Calu3 (cell line): ENCODE measurements at regions of chr7 and their contacts with region 1.

Region 1: GRCh38 chr7:6272481-6273323 is at the start of gene CYTH3:
- DNase-seq: peak; percentile 97
- H3K4me3 Mint-ChIP-seq: peak within 1 kb of the TSS; percentile 99
- H3K27ac Mint-ChIP-seq: peak within 1 kb of the TSS; percentile 89
- H3K4me1 Mint-ChIP-seq: peaks cover 70% of the 10 kb centered on the region
- H3K27me3 Mint-ChIP-seq: no peaks in the 10 kb centered on the region
- CTCF ChIP-seq: no peak
- total RNA-seq, gene CYTH3: 47.2 and 73.4 TPM in 2 replicates

Region 2: GRCh38 chr7:5574770-5575269 is 697.9 kb before region 1 on chr7:
- CTCF ChIA-PET with region 1: no interaction called
- intact Hi-C with region 1: no loop called
- DNase-seq: no peak
- H3K4me3 Mint-ChIP-seq: no peak overlapping the region
- H3K27ac Mint-ChIP-seq: no peak overlapping the region
- H3K4me1 Mint-ChIP-seq: no peaks in the 10 kb centered on the region
- H3K27me3 Mint-ChIP-seq: peaks cover 51% of the 10 kb centered on the region
- CTCF ChIP-seq: no peak

Region 3: DNA sequence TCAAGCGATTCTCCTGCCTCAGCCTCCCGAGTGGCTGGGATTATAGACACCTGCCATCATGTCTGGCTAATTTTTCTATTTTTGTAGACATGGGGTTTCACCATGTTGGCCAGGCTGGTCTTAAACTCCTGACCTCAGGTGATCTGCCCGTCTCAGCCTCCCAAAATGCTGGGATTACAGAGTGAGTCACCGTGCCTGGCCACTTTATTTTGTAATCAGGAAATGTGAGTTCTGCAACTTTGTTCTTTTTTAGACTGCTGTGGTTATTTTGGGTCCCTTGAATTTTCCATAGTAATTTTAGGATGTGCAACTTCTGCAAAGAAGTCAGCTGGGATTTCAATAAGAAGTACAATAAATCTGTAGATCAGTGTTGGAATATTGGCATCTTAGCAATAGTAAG is 97.1 kb before region 1 on chr7:
- CTCF ChIA-PET with region 1: no interaction called
- intact Hi-C with region 1: loop called (anchors 5 kb)
- DNase-seq: peak; percentile 42
- H3K4me3 Mint-ChIP-seq: no peak overlapping the region
- H3K27ac Mint-ChIP-seq: no peak overlapping the region
- H3K4me1 Mint-ChIP-seq: peaks cover 8% of the 10 kb centered on the region
- H3K27me3 Mint-ChIP-seq: no peaks in the 10 kb centered on the region
- CTCF ChIP-seq: no peak

Region 4: DNA sequence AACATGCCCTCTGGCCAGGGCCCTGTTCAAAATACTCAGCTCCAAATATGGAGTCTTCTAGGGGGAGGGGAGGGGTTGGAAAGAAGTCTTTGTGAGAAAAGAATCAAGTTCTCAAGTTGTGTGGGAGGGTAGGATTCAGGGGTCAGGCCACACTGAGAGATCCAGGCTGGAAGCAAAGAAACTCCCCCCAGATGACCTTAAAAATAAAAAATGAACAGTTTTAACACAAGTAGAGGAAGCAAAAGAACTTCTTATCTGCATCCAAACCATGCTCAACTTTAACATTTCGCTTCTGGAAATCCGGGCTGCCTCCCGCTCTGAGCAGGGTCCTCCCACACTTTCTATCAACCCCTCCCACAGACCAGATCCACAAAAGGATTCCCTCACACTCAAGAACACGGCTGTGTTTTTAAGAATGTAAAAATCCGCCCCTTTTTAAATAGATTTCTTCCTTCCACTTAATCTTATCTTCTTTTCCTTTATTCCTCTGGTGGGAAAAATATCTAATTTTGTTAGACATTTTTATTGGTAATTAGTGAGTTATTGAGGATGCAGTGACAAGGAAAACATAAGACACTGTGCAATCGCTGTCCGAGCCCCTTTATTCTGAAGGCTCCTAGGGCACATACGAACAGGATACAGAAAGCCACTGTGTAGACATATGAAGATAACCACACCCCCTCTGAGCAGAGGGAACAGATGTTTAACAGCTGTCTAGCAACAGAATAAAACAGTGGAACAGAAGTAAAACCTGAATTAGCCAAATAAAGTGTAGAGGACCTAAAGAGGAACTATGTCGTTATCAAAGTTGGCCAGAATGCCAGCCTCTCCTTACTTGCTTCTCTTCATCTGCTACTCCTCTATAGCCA is 44.1 kb before region 1 on chr7:
- CTCF ChIA-PET with region 1: interaction called, 4 read pairs
- intact Hi-C with region 1: loop called (anchors 5 kb)
- DNase-seq: no peak
- H3K4me3 Mint-ChIP-seq: no peak overlapping the region
- H3K27ac Mint-ChIP-seq: no peak overlapping the region
- H3K4me1 Mint-ChIP-seq: peaks cover 42% of the 10 kb centered on the region
- H3K27me3 Mint-ChIP-seq: no peaks in the 10 kb centered on the region
- CTCF ChIP-seq: no peak

Region 5: GRCh38 chr7:6306471-6306870 is 33.8 kb after region 1 on chr7:
- CTCF ChIA-PET with region 1: interaction called, 13 read pairs
- intact Hi-C with region 1: loop called (anchors 5 kb)
- DNase-seq: peak; percentile 89
- H3K4me3 Mint-ChIP-seq: no peak overlapping the region
- H3K27ac Mint-ChIP-seq: peak overlapping the region; percentile 81
- H3K4me1 Mint-ChIP-seq: peaks cover 38% of the 10 kb centered on the region
- H3K27me3 Mint-ChIP-seq: no peaks in the 10 kb centered on the region
- CTCF ChIP-seq: no peak